HepG2 (cell line): ENCODE measurements at regions of chr12 and their contacts with region 1.

Region 1: GRCh38 chr12:56041552-56042429 is at the start of gene RPS26:
- DNase-seq: peak; percentile 99
- ATAC-seq: peak; percentile 95
- H3K4me3 ChIP-seq: peak within 1 kb of the TSS; percentile 84 to 94 (median 87)
- H3K27ac ChIP-seq: peak within 1 kb of the TSS; percentile 98
- H3K4me1 ChIP-seq: peaks cover 45% of the 10 kb centered on the region
- H3K27me3 ChIP-seq: no peaks in the 10 kb centered on the region
- CTCF ChIP-seq: peak; percentile 79
- EP300 ChIP-seq: 0 out of 4 replicates have a peak, but pooled peaks of 1 of the 2 experiments have one; percentile 10
- POLR2A ChIP-seq: peak; percentile 98 to 99
- RAD21 ChIP-seq: 0 out of 2 replicates have a peak, but pooled peaks have one; percentile 10
- total RNA-seq, gene RPS26: 421 and 486 TPM in 2 replicates

Region 2: DNA sequence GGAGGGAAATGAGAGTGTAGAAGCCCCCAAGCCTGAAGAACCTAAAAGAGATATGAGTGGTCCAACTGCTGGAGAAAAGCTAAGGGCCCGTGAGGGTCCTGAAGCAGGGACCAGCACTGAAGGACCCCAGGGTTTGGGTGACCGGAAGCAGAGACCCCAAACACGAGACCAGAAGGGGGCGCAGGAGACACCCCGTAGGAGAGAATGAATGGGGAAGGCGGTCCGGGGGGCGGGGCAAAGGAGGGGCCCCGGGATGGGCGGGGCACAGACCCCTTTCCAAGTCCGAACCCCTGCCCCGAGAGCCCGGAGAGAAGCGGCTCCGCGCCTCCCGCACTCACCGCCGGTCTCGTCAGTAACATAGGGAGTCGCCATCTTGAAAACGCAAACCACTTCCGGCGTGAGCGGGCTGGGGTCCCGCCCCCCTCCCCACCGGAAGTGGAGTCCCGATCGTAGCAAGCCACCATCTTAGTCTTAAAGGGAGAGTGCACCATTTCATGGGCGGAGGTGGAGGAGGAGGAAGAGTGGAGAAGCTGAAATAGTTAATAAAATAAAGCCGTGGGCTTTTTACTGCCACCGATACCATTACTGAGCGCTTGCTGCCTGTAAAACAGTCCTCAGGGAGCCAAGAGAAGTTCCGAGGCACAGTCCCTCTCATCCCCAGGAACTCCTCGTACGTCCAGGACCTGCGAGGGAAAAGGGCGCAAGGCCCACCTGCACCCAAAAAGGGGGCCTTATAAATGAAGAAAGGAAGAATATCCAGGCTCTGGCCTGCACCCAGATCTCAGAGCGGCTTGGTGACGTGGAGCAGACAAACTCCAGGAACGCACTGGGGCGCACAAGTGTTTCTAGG is 114.8 kb before region 1 on chr12:
- CTCF ChIA-PET with region 1: no interaction called
- POLR2A ChIA-PET with region 1: interaction called, 6 read pairs
- in situ Hi-C with region 1: no loop called
- intact Hi-C with region 1: loop called (anchors 1 kb)
- DNase-seq: peak; percentile 90
- ATAC-seq: peak; percentile 73
- H3K4me3 ChIP-seq: peak overlapping the region; percentile 72 to 90 (median 89)
- H3K27ac ChIP-seq: peak overlapping the region; percentile 96
- H3K4me1 ChIP-seq: peaks cover 58% of the 10 kb centered on the region
- H3K27me3 ChIP-seq: no peaks in the 10 kb centered on the region; a peak in 1 of 5 replicates
- CTCF ChIP-seq: peak; percentile 79
- EP300 ChIP-seq: no peak
- POLR2A ChIP-seq: peak; percentile 56 to 62
- RAD21 ChIP-seq: no peak

Region 3: GRCh38 chr12:56029666-56030293 is 12.0 kb before region 1 on chr12:
- CTCF ChIA-PET with region 1: interaction called, 5 read pairs
- POLR2A ChIA-PET with region 1: no interaction called
- in situ Hi-C with region 1: no loop called
- intact Hi-C with region 1: loop called (anchors 1 kb)
- DNase-seq: peak; percentile 71
- ATAC-seq: peak; percentile 94
- H3K4me3 ChIP-seq: no peak overlapping the region
- H3K27ac ChIP-seq: no peak overlapping the region
- H3K4me1 ChIP-seq: peaks cover 13% of the 10 kb centered on the region
- H3K27me3 ChIP-seq: no peaks in the 10 kb centered on the region
- CTCF ChIP-seq: peak; percentile 82
- EP300 ChIP-seq: no peak
- POLR2A ChIP-seq: no peak
- RAD21 ChIP-seq: peak; percentile 77

Region 4: DNA sequence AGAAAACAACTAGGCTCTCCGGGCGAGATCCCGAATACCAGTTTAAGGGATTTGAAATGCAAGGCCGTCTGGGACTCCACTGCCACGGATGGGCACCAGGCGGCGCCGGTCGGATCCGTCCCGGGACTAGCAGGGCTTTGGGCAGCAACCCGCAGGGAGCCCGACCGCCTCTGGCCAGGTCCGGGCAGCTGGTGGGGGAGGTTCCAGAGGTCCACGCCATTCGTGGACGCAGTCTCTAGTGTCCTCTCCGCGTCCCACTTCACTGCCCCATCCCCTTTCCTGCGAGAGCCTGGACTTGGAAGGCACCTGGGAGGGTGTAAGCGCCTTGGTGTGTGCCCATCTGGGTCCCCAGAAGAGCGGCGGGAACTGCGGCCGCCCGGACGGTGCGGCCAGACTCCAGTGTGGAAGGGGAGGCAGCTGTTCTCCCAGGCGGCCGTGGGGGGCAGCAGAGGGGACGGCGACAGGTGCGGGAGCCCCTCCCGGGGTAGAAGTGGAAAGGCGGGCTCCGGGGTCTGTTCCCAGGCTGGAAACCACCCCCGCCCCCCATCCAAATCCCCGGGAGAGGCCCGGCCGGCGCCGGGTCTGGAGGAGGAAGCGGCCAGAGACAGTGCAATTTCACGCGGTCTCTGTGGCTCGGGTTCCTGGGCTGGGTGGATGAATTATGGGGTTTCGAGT is 37.3 kb after region 1 on chr12:
- CTCF ChIA-PET with region 1: interaction called, 10 read pairs
- POLR2A ChIA-PET with region 1: interaction called, 40 read pairs
- in situ Hi-C with region 1: no loop called
- intact Hi-C with region 1: loop called (anchors 2 kb)
- DNase-seq: peak; percentile 81
- ATAC-seq: peak; percentile 61
- H3K4me3 ChIP-seq: peak overlapping the region; percentile 89 to 96 (median 91)
- H3K27ac ChIP-seq: peak overlapping the region; percentile 99
- H3K4me1 ChIP-seq: peaks cover 49% of the 10 kb centered on the region
- H3K27me3 ChIP-seq: no peaks in the 10 kb centered on the region; a peak in 1 of 5 replicates
- CTCF ChIP-seq: peak; percentile 83
- EP300 ChIP-seq: 0 out of 4 replicates have a peak, but pooled peaks of 1 of the 2 experiments have one; percentile 22
- POLR2A ChIP-seq: peak; percentile 67 to 73; a peak in 3 of 4 replicates
- RAD21 ChIP-seq: peak; percentile 80

Region 5: DNA sequence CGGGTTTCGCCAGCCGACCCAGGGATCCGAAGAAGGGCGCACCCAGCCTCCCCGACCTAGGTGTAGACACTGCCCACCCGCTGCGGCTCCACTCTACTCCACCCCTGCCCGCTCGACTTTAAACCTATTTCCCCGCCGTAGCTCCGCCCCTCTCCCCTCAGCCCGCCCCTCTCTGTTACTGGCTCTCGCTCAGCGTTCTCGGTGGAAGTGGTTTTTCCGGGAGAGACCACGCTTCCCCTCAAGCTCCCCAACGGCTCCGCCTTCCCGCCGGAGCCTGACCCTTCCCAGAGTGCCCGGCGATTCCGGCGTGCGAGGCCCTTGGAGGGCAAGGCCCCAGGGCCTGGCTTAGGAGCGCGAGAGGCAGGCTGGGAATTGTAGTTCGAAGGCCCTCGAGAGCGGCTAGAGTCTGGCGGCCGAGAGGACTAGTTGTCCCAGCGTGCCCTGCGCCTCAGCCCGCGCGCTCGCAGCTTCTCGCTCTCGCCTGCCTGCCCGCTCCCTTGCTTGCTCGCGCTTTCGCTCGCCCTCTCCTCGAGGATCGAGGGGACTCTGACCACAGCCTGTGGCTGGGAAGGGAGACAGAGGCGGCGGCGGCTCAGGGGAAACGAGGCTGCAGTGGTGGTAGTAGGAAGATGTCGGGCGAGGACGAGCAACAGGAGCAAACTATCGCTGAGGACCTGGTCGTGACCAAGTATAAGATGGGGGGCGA is 62.5 kb after region 1 on chr12 and contains the start of gene PA2G4:
- CTCF ChIA-PET with region 1: no interaction called
- POLR2A ChIA-PET with region 1: interaction called, 15 read pairs
- in situ Hi-C with region 1: loop called (anchors 5 kb)
- intact Hi-C with region 1: loop called (anchors 2 kb)
- DNase-seq: peak; percentile 97
- ATAC-seq: peak; percentile 94
- H3K4me3 ChIP-seq: peak within 1 kb of the TSS; percentile 50 to 85 (median 74)
- H3K27ac ChIP-seq: peak within 1 kb of the TSS; percentile 76
- H3K4me1 ChIP-seq: peaks cover 35% of the 10 kb centered on the region
- H3K27me3 ChIP-seq: no peaks in the 10 kb centered on the region
- CTCF ChIP-seq: 0 out of 2 replicates have a peak, but pooled peaks have one; percentile 10
- EP300 ChIP-seq: peak in 1 of 2 experiments; percentile 21; a peak in 2 of 4 replicates
- POLR2A ChIP-seq: peak; percentile 91
- RAD21 ChIP-seq: no peak
- total RNA-seq, gene PA2G4: 240 and 281 TPM in 2 replicates